ENCODE measurements at regions of chr15 and their contacts with region 1.

Region 1: DNA sequence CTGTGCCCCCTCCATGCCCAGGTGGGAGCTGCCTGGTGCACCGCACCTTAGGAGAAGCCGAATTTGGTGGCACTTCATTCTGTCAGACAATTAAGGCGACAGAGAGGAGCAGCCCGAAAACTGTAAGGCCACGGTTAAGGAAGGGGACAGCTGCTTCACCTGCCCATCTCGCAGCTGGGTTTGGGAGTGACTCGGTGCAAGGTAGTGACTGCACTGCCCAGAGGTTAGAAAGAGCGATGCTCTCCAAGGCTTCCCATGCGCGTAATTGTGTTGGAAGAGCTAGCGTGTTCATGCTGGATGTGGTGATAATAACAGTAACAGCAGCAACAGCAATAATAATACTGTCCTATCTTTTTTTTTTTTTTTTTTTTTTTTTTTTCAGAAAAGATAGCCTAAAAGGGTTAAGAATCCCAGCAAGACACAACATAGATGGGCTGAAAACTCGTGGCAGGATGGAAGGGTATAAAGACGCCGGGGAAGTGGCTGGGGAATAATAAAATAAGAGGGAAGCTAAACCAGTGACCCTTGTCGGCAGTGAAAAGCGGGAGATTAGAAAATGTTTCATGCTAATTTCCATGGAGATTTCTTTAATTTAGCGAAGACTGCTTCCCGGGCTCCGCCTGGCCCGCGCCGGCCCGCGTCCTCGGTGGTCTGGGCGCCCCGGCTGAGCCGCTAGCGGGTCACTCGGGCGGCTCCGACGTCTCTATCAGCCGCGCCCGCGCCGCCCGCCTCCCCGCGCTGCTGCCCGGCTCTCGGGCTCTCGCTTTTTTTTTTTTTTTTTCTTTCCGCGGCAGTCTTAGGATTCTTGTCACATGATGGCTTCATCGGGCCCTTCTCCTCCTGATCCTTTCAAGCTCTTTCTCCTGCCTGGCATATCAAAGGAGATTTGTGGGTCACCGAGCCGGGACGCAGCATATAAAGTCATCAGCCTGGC is 617.1 kb downstream of the NR2F2 start:
- DNase-seq: no peak
- H3K4me3 ChIP-seq: peak overlapping the region; percentile 6 to 41 (median 27)
- H3K27ac ChIP-seq: no peak overlapping the region
- H3K4me1 ChIP-seq: no peaks in the 10 kb centered on the region
- H3K27me3 ChIP-seq: peaks cover 0 to 36% of the 10 kb centered on the region in 2 donors
- CTCF ChIP-seq: no peak
- POLR2A ChIP-seq: no peak

Region 2: GRCh38 chr15:96958721-96959120 is 11.2 kb after region 1 on chr15:
- intact Hi-C with region 1: loop called (anchors 1 kb)
- DNase-seq: no peak
- H3K4me3 ChIP-seq: no peak overlapping the region
- H3K27ac ChIP-seq: no peak overlapping the region
- H3K4me1 ChIP-seq: no peaks in the 10 kb centered on the region
- H3K27me3 ChIP-seq: no peaks in the 10 kb centered on the region
- CTCF ChIP-seq: no peak
- POLR2A ChIP-seq: no peak

Region 3: GRCh38 chr15:98051734-98052133 is 1104.2 kb after region 1 on chr15:
- intact Hi-C with region 1: no loop called
- DNase-seq: no peak
- H3K4me3 ChIP-seq: no peak overlapping the region
- H3K27ac ChIP-seq: no peak overlapping the region
- H3K4me1 ChIP-seq: no peaks in the 10 kb centered on the region
- H3K27me3 ChIP-seq: no peaks in the 10 kb centered on the region
- CTCF ChIP-seq: no peak
- POLR2A ChIP-seq: no peak

Measured in breast epithelium (tissue), 4 donors.